GM12878 (cell line): ENCODE measurements at regions of chr3 and their contacts with region 1.

Region 1: DNA sequence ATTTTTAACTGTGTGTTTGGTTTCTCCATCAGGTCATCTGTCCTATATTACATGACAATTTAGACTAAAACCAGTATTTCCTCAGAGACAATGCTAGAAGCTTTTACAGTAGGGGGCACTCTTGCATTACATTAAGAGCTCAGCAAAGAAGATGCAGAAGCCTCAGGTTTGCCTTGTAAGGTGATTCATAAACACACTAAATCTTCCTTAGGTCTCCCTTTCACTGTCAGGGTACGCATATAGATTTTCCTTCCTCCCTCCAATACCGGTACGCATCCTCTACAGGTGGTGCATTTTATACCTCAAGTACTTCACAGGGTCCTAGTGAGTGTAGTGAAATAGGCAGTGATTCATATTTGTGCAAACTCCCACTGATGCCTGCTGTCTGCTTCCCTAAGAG is 46.5 kb downstream of the CD86 start:
- DNase-seq: peak; percentile 92
- ATAC-seq: peak; percentile 66
- H3K4me3 ChIP-seq: peak overlapping the region; percentile 17; the same call in 1 of the 2 replicates
- H3K27ac ChIP-seq: peak overlapping the region; percentile 76
- H3K4me1 ChIP-seq: peaks cover 71% of the 10 kb centered on the region
- H3K27me3 ChIP-seq: no peaks in the 10 kb centered on the region
- CTCF ChIP-seq: peak; percentile 57 to 88 (median 70)
- EP300 ChIP-seq: no peak
- POLR2A ChIP-seq: no peak
- RAD21 ChIP-seq: peak; percentile 97

Region 2: DNA sequence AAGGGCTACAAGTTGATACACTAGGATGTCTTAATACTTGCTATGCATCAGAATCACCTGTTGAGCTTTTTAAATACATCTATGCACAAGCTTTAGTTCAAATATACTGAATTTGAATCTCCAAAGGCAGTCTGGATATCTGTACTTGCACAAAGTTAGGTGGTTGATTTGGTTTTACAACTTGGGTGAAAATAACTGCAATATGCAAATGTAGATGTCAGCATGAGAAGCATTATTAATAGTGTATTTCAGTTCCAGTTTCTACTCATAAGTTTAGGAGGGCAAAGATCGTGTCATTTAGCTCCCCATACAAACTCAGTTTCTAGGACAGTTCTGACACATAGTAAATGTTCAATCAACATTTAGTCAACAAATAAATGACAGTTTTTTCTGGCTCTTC is 292.4 kb before region 1 on chr3:
- CTCF ChIA-PET with region 1: interaction called, 3 read pairs
- POLR2A ChIA-PET with region 1: interaction called, 10 read pairs
- RAD21 ChIA-PET with region 1: interaction called, 4 read pairs
- SMC1A ChIA-PET with region 1: interaction called, 12 read pairs
- in situ Hi-C with region 1: no loop called
- intact Hi-C with region 1: no loop called
- DNase-seq: peak; percentile 84
- ATAC-seq: peak; percentile 99
- H3K4me3 ChIP-seq: no peak overlapping the region
- H3K27ac ChIP-seq: peak overlapping the region; percentile 81
- H3K4me1 ChIP-seq: peaks cover 26% of the 10 kb centered on the region
- H3K27me3 ChIP-seq: no peaks in the 10 kb centered on the region
- CTCF ChIP-seq: no peak
- EP300 ChIP-seq: peak; percentile 75 to 87
- POLR2A ChIP-seq: no peak
- RAD21 ChIP-seq: no peak

Region 3: GRCh38 chr3:122021811-122022401 is 79.7 kb before region 1 on chr3 and contains the start of gene ILDR1:
- CTCF ChIA-PET with region 1: interaction called, 16 read pairs
- POLR2A ChIA-PET with region 1: interaction called, 31 read pairs
- RAD21 ChIA-PET with region 1: interaction called, 44 read pairs
- SMC1A ChIA-PET with region 1: interaction called, 66 read pairs
- in situ Hi-C with region 1: no loop called
- intact Hi-C with region 1: no loop called
- DNase-seq: no peak
- ATAC-seq: peak; percentile 55
- H3K4me3 ChIP-seq: peak within 1 kb of the TSS; percentile 72
- H3K27ac ChIP-seq: peak within 1 kb of the TSS; percentile 65
- H3K4me1 ChIP-seq: peaks cover 49% of the 10 kb centered on the region
- H3K27me3 ChIP-seq: no peaks in the 10 kb centered on the region
- CTCF ChIP-seq: no peak
- EP300 ChIP-seq: no peak
- POLR2A ChIP-seq: peak; percentile 60; the same call in 1 of the 2 replicates
- RAD21 ChIP-seq: no peak
- polyA plus RNA-seq, gene ILDR1: 1.3 to 1.8 TPM

Region 4: DNA sequence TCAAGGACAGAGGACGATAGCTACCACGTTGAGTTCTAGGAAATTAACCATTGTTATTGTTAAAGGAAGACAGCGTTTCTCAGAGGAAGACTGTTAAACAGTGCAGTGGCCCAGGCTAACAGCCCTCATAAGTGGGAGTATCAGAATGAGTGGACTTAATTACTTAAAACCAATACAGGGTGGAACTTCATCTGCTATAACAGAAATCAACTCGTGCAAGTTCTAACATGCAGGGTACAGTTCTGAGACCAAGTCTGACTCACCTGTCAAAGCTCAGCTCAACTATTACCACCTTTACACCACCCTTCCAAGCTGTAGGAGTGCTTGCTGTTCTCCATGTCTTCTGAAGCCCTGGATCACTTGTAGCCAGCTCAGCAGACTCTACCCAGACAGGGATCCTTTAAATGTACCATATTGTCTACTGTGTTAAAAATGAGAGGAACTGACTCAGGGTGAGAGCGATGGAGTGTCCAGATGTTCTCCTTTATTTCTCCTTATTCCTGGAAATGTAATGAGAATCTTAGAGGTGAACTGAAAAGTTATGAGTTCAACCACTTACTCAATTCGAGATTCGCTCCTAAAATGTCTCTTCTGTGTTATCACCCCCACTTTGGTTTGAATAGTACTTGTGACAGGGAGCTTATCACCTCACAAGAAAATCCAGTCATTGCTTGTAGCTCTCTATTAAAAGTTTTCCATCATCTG is 20.0 kb before region 1 on chr3:
- CTCF ChIA-PET with region 1: interaction called, 114 read pairs
- POLR2A ChIA-PET with region 1: interaction called, 165 read pairs
- RAD21 ChIA-PET with region 1: interaction called, 426 read pairs
- SMC1A ChIA-PET with region 1: interaction called, 604 read pairs
- in situ Hi-C with region 1: no loop called
- intact Hi-C with region 1: loop called (anchors 2 kb)
- DNase-seq: no peak
- ATAC-seq: peak; percentile 57
- H3K4me3 ChIP-seq: peak overlapping the region; percentile 86; the same call in 1 of the 2 replicates
- H3K27ac ChIP-seq: peak overlapping the region; percentile 97
- H3K4me1 ChIP-seq: peaks cover 62% of the 10 kb centered on the region
- H3K27me3 ChIP-seq: no peaks in the 10 kb centered on the region
- CTCF ChIP-seq: no peak
- EP300 ChIP-seq: peak; percentile 62 to 89; a peak in 3 of 4 replicates
- POLR2A ChIP-seq: no peak
- RAD21 ChIP-seq: 0 out of 2 replicates have a peak, but pooled peaks have one; percentile 12

Region 5: DNA sequence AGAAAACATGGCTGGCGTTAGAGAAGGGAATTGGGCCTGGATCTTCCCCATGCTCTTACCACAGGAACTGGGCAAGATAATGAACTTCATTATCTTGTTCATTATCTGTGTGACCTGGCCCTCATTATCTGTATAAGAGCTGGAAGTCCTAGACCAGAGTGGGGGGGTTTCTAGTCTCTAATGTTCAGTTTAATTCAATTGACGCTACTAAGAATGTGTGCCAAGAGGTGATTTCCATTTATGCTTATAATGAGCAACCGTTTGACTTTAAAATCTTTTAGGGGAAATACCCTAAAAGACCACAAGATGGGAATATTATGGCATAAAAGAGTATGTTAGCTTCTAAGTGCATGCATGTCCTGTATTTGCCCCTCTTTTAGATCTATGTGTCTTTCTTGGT is 164.3 kb after region 1 on chr3:
- CTCF ChIA-PET with region 1: interaction called, 237 read pairs
- POLR2A ChIA-PET with region 1: interaction called, 178 read pairs
- RAD21 ChIA-PET with region 1: interaction called, 441 read pairs
- SMC1A ChIA-PET with region 1: interaction called, 590 read pairs
- in situ Hi-C with region 1: loop called (anchors 5 kb)
- intact Hi-C with region 1: no loop called
- DNase-seq: no peak
- ATAC-seq: peak; percentile 11; the same call in 2 of the 3 replicates
- H3K4me3 ChIP-seq: no peak overlapping the region
- H3K27ac ChIP-seq: peak overlapping the region; percentile 43; the same call in 1 of the 2 replicates
- H3K4me1 ChIP-seq: peaks cover 26% of the 10 kb centered on the region
- H3K27me3 ChIP-seq: no peaks in the 10 kb centered on the region
- CTCF ChIP-seq: 0 out of 6 replicates have a peak, but pooled peaks of 1 of the 3 experiments have one; percentile 3
- EP300 ChIP-seq: 0 out of 4 replicates have a peak, but pooled peaks of 1 of the 2 experiments have one; percentile 11
- POLR2A ChIP-seq: no peak
- RAD21 ChIP-seq: peak; percentile 38; the same call in 1 of the 2 replicates

Region 6: DNA sequence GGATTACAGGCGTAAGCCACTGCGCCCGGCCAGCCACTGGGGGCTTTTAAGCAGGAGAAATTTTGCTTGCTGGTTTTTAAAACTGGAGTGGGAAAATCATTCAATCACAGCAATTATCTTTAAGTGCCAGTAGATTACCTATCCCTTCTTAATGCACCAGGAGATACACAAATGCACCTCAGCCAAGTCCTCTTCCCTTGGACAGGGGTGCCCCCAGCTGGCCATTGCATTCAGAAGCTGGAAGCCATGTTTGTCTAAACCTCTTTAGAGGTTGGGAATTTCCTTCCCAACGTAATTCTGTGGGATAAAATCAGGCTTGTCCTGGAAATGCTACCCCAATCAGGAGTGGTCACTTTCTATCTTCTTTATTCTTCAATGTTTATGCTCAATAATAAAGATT is 254.8 kb after region 1 on chr3:
- CTCF ChIA-PET with region 1: interaction called, 44 read pairs
- POLR2A ChIA-PET with region 1: no interaction called
- RAD21 ChIA-PET with region 1: interaction called, 40 read pairs
- SMC1A ChIA-PET with region 1: interaction called, 46 read pairs
- in situ Hi-C with region 1: loop called (anchors 5 kb)
- intact Hi-C with region 1: loop called (anchors 1 kb)
- DNase-seq: no peak
- ATAC-seq: peak; percentile 72
- H3K4me3 ChIP-seq: no peak overlapping the region
- H3K27ac ChIP-seq: no peak overlapping the region
- H3K4me1 ChIP-seq: no peaks in the 10 kb centered on the region
- H3K27me3 ChIP-seq: no peaks in the 10 kb centered on the region
- CTCF ChIP-seq: peak; percentile 49 to 80 (median 51); a peak in 4 of 6 replicates
- EP300 ChIP-seq: no peak
- POLR2A ChIP-seq: no peak
- RAD21 ChIP-seq: peak; percentile 93

Region 7: DNA sequence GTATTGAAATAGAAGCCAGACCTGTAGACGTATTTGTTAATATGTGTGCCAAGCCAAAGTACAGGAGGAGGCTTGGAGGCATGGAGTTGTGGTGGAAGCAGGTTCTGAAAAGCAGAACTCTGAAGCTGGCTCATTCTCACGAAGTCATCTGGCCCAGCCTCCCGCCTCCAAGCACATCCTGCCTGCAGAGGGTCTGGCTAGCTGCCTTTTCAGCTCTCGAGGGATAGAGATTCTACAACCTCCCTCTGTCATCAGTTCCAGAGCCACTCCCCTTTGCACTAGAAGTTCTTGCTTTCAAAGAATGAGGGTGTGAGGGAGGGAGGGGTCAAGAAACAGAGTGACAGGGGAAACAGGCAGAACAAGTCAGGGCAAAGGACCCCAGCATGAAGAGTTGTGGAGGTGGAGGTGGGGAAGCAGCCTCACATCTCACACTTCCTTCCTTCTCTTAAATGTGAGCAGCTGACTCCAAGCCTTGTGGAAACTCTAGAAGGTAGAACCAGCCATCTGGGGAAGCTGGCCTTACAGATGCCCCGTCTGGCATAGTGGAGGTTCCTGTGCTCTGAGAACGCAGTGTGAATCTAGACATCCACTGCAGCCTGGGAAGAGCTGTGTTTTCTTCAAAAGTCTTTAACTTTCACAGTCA is 788.6 kb after region 1 on chr3:
- CTCF ChIA-PET with region 1: no interaction called
- POLR2A ChIA-PET with region 1: no interaction called
- RAD21 ChIA-PET with region 1: no interaction called
- SMC1A ChIA-PET with region 1: no interaction called
- in situ Hi-C with region 1: no loop called
- intact Hi-C with region 1: no loop called
- DNase-seq: peak; percentile 19
- ATAC-seq: peak; percentile 59
- H3K4me3 ChIP-seq: no peak overlapping the region
- H3K27ac ChIP-seq: no peak overlapping the region
- H3K4me1 ChIP-seq: peaks cover 15% of the 10 kb centered on the region
- H3K27me3 ChIP-seq: no peaks in the 10 kb centered on the region
- CTCF ChIP-seq: no peak
- EP300 ChIP-seq: no peak
- POLR2A ChIP-seq: no peak
- RAD21 ChIP-seq: no peak